ENCODE measurements at regions of chr17 and their contacts with region 1.

Region 1: DNA sequence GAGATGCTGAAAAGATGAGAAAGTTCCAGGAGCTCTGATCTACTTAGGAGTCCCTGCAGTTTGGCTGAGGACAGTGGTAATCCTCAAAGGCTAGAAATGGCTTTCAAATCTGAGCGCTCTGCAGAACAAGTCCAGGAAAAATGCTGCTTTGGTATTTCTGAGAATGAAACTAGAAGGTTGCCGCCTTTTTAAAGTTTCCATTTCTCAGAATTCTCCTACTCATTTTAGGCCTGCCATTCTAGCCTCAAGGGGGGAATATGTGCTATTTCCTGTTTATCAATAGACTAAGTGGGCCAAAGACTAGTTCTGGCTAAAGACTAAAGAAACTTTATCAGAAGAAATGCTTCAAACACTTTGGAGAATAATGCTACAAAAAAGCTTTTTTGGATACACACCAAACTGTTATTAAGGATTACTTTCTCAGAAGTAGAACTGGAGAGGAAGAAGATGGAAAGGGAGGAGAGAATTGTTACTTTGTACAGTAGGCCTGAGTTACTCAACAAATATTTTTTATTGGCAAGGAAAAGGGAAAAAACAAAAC is at the start of gene SLFN12L:
- DNase-seq: peak; percentile 54
- H3K4me3 Mint-ChIP-seq: peak within 1 kb of the TSS; percentile 92
- H3K27ac Mint-ChIP-seq: peak within 1 kb of the TSS; percentile 98
- H3K4me1 Mint-ChIP-seq: peaks cover 47% of the 10 kb centered on the region
- H3K27me3 Mint-ChIP-seq: no peaks in the 10 kb centered on the region
- total RNA-seq, gene SLFN12L: 23.5 to 25.2 TPM

Region 2: DNA sequence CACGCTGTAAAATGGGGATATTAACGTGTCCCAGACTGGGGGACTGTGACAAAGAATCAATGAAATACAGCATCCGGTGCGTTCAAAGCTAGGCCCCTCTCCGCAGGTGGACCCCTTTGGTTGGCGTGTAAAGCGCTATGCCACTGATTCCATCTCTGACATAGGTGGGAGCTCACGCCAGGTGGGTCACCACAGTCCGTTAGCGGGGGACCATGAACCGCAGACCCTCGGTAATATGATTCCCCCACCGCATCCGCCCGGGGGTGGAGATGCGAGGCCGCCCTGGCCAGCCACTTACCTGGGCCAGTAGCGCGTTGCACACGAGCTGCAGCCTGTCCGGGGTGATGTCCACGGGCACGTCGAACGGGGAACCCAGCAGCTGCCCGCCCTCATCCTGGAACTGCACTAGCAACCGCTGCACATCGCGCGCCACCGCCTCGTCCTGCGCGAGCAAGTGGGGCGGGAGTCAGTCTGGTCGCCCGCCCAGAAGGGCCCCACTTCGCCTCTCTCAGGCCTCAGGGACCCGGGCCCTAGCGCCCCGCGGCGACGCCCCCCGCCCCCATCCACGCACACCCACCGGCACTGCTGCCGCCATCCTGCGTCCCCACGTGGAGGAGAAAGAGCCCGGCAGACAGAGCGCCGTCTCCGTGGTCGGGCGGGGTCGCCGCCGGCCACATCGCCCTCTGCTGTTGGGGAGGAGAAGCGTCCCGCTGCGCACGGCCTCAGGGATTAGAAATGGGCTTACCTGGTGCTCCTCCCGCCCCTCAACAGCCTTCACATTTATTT is 395.8 kb before region 1 on chr17 and contains the start of gene NLE1:
- CTCF ChIA-PET with region 1: interaction called, 11 read pairs
- intact Hi-C with region 1: loop called (anchors 2 kb)
- DNase-seq: peak; percentile 89
- H3K4me3 Mint-ChIP-seq: peak within 1 kb of the TSS; percentile 77
- H3K27ac Mint-ChIP-seq: peak within 1 kb of the TSS; percentile 82
- H3K4me1 Mint-ChIP-seq: peaks cover 25% of the 10 kb centered on the region
- H3K27me3 Mint-ChIP-seq: no peaks in the 10 kb centered on the region
- total RNA-seq, gene NLE1: 33.0 to 35.2 TPM

Region 3: GRCh38 chr17:35214631-35215273 is 322.9 kb before region 1 on chr17:
- CTCF ChIA-PET with region 1: interaction called, 4 read pairs
- intact Hi-C with region 1: loop called (anchors 1 kb)
- DNase-seq: peak; percentile 48
- H3K4me3 Mint-ChIP-seq: peak overlapping the region; percentile 45
- H3K27ac Mint-ChIP-seq: peak overlapping the region; percentile 88
- H3K4me1 Mint-ChIP-seq: peaks cover 84% of the 10 kb centered on the region
- H3K27me3 Mint-ChIP-seq: no peaks in the 10 kb centered on the region

Region 4: DNA sequence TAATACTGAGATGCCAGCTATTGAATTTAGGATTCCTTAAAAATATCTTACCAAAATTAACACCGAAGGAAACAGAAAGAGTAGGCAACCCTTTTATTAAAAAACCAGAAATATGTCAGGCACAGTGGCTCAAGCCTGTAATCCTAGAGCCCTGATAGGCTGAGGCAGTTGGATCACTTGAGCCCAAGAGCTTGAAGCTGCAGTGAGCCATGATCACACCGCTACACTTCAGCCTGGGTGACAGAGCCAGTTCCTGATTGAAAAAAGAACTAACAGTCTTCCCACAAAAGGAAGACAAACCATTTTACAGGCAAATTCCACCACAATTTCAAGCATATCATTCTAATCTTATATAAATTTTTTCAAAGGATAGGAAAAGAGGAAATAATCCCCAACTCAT is 121.0 kb before region 1 on chr17:
- CTCF ChIA-PET with region 1: no interaction called
- intact Hi-C with region 1: no loop called
- DNase-seq: no peak
- H3K4me3 Mint-ChIP-seq: no peak overlapping the region
- H3K27ac Mint-ChIP-seq: no peak overlapping the region
- H3K4me1 Mint-ChIP-seq: peaks cover 2% of the 10 kb centered on the region
- H3K27me3 Mint-ChIP-seq: no peaks in the 10 kb centered on the region

Region 5: DNA sequence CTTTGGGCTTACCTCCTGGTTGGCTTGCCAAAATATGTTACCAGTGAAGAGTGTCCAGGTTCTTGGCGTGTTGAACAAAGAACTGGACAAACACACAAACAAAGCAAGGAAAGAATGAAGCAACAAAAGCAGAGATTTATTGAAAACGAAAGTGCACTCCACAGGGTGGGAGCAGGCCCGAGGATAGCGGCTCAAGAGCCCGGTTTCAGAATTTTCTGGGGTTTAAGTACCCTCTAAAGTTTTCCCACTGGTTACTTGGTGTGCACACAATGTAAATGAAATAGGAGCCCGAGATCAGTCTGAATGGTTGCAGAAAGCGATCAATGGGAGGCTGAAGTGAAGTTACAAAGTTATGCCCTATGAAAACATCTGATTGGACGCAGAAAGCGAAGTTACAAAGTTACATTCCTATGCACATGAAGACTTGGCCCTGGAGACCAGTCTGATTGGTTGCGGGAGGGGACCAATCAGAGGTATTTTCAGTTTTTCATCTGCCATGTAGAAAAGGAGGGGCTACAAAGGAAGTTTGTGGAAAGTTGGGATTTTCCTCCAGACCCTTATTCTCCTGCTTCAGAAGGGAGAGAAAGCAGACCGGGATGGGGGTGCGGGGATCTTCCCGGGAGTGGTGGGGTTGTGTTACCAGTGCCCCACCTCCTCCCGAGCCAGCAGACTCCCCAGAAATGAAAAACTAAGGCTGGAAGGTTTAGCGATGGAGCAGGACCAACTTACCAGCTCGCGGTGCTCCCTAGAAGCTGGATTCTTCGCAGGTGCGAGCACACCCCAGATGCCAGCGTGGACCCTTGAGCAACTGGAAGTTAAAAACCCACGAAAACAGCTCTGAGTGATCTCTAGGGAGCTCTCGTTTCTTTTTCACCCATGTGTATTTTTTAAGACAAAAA is 105.2 kb before region 1 on chr17 and contains the start of gene SLFN12:
- CTCF ChIA-PET with region 1: interaction called, 5 read pairs
- intact Hi-C with region 1: loop called (anchors 1 kb)
- DNase-seq: peak; percentile 66
- H3K4me3 Mint-ChIP-seq: peak within 1 kb of the TSS; percentile 87
- H3K27ac Mint-ChIP-seq: peak within 1 kb of the TSS; percentile 88
- H3K4me1 Mint-ChIP-seq: peaks cover 41% of the 10 kb centered on the region
- H3K27me3 Mint-ChIP-seq: no peaks in the 10 kb centered on the region
- total RNA-seq, gene SLFN12: 5.3 to 5.6 TPM

Region 6: GRCh38 chr17:35578197-35578928 is 40.7 kb after region 1 on chr17 and contains the start of gene PEX12:
- CTCF ChIA-PET with region 1: interaction called, 7 read pairs
- intact Hi-C with region 1: loop called (anchors 2 kb)
- DNase-seq: peak; percentile 93
- H3K4me3 Mint-ChIP-seq: peak within 1 kb of the TSS; percentile 93
- H3K27ac Mint-ChIP-seq: peak within 1 kb of the TSS; percentile 98
- H3K4me1 Mint-ChIP-seq: peaks cover 19% of the 10 kb centered on the region
- H3K27me3 Mint-ChIP-seq: no peaks in the 10 kb centered on the region
- total RNA-seq, gene PEX12: 6.2 to 6.5 TPM

Region 7: GRCh38 chr17:35808962-35809854 is 271.5 kb after region 1 on chr17 and contains the start of gene TAF15:
- CTCF ChIA-PET with region 1: interaction called, 5 read pairs
- intact Hi-C with region 1: loop called (anchors 1 kb)
- DNase-seq: peak; percentile 98
- H3K4me3 Mint-ChIP-seq: peak within 1 kb of the TSS; percentile 83
- H3K27ac Mint-ChIP-seq: peak within 1 kb of the TSS; percentile 99
- H3K4me1 Mint-ChIP-seq: peaks cover 55% of the 10 kb centered on the region
- H3K27me3 Mint-ChIP-seq: no peaks in the 10 kb centered on the region
- total RNA-seq, gene TAF15: 252 to 256 TPM

Measured in activated naive CD4-positive, alpha-beta T cell treated with anti-CD3 and anti-CD28 coated beads for 36 hours (primary cell).